Activated CD4-positive, alpha-beta T cell treated with anti-CD3 and anti-CD28 coated beads, Interleukin-2, amount 10 ng/mL, durations not matched to agents 7 days and 5 days (primary cell): ENCODE measurements at regions of chr1 and their contacts with region 1.

Region 1: GRCh38 chr1:168234846-168235547 is 9.2 kb downstream of the SFT2D2 start:
- DNase-seq: peak; percentile 60
- H3K4me3 Mint-ChIP-seq: no peak overlapping the region
- H3K27ac Mint-ChIP-seq: peak overlapping the region; percentile 10
- H3K4me1 Mint-ChIP-seq: peaks cover 56% of the 10 kb centered on the region
- H3K27me3 Mint-ChIP-seq: no peaks in the 10 kb centered on the region

Region 2: DNA sequence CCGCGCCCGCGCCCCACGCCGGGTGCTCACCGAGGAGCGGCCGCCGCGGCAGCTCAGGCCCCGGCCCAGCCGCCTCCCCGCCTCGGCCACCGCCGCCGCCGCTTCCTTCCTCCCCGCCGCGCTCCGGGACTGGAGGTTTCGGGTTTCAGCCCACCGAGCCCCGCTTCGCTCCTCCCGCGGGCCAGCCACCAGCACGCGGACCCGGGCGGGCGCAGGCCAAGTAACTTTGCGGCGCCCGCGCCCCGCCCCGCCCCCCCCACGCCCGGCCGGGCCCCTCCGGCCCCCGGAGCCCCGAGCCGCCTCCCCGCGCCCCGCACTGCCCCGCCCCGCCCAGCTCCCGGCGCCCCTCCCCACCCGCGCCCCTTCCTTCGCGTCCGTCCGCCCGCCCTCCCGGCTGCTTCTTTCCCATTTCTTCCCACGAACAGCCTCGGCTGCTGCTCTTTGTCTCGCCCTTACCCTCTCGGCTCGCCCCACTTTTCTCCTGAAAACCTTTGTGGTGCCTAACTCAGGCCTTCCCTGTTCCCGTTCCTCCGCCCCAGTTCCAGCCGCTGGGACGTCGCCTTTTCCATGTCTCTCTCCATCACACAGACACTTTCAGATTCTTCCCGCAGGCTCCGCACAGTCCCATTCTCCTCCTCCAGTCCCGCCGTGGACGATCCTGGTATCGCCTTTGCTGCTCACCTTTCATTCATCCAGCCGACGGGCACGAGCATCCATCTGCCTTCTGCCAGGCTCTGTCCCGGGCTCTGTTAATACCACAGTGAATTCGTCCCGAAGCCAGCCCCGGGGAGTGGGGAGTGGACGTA is 98.1 kb before region 1 on chr1 and contains the start of gene GPR161:
- CTCF ChIA-PET with region 1: no interaction called
- POLR2A ChIA-PET with region 1: no interaction called
- DNase-seq: peak; percentile 9
- H3K4me3 Mint-ChIP-seq: peak within 1 kb of the TSS; percentile 75
- H3K27ac Mint-ChIP-seq: peak within 1 kb of the TSS; percentile 62
- H3K4me1 Mint-ChIP-seq: peaks cover 20% of the 10 kb centered on the region
- H3K27me3 Mint-ChIP-seq: peaks cover 48% of the 10 kb centered on the region
- total RNA-seq, gene GPR161: 0.10 to 0.17 TPM

Region 3: GRCh38 chr1:168261390-168261789 is 26.4 kb after region 1 on chr1:
- CTCF ChIA-PET with region 1: interaction called, 12 read pairs
- POLR2A ChIA-PET with region 1: no interaction called
- DNase-seq: no peak
- H3K4me3 Mint-ChIP-seq: no peak overlapping the region
- H3K27ac Mint-ChIP-seq: no peak overlapping the region
- H3K4me1 Mint-ChIP-seq: peaks cover 12% of the 10 kb centered on the region
- H3K27me3 Mint-ChIP-seq: no peaks in the 10 kb centered on the region

Region 4: DNA sequence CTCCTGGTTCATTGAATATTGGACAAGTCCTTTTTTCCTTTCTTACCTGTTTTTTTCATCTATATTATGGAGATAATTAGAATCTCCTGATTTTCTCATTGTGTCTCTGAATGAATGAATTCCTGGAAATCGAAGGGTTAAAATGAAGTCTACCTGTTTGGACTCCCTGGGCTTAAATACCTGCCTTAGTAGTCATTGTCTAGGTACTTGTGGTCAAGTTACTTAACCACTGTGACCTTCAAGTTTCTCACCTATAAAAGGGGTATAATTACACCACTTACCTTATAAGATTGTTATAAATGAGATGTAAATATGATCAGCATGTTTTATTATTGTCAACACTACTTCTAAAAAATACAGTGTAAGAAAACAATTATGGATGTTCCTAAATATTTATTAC is 36.6 kb after region 1 on chr1:
- CTCF ChIA-PET with region 1: no interaction called
- POLR2A ChIA-PET with region 1: no interaction called
- DNase-seq: no peak
- H3K4me3 Mint-ChIP-seq: no peak overlapping the region
- H3K27ac Mint-ChIP-seq: no peak overlapping the region
- H3K4me1 Mint-ChIP-seq: no peaks in the 10 kb centered on the region
- H3K27me3 Mint-ChIP-seq: no peaks in the 10 kb centered on the region

Region 5: DNA sequence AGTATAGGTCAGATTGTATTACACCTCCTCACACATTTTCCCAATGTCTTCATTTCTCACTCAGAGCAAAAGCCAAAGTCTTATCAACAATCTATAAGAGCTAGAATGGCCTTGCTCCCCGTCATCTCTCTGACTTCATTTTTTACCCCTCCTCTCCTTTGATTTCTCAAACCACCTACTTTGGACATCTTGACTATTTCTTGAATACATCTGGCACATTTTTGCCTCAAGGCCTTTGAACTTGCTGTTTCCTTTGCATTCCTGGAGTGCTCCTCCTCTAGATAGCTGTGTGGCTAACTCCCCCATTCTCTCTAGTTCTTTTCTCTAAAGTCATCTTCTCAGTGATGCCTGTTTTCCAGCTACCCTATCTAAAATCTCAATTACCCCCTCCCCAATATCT is 316.0 kb after region 1 on chr1:
- CTCF ChIA-PET with region 1: no interaction called
- POLR2A ChIA-PET with region 1: no interaction called
- DNase-seq: no peak
- H3K4me3 Mint-ChIP-seq: no peak overlapping the region
- H3K27ac Mint-ChIP-seq: no peak overlapping the region
- H3K4me1 Mint-ChIP-seq: peaks cover 18% of the 10 kb centered on the region
- H3K27me3 Mint-ChIP-seq: peaks cover 8% of the 10 kb centered on the region